MCF 10A (cell line): ENCODE measurements at regions of chr10 and their contacts with region 1.

Region 1: GRCh38 chr10:73848821-73849489 is 25.4 kb downstream of the CAMK2G start:
- DNase-seq: peak; percentile 79
- H3K4me3 Mint-ChIP-seq: no peak overlapping the region
- H3K27ac Mint-ChIP-seq: no peak overlapping the region
- H3K4me1 Mint-ChIP-seq: no peaks in the 10 kb centered on the region
- H3K27me3 Mint-ChIP-seq: no peaks in the 10 kb centered on the region
- CTCF ChIP-seq: peak; percentile 98

Region 2: GRCh38 chr10:73837072-73837471 is 11.9 kb before region 1 on chr10:
- CTCF ChIA-PET with region 1: interaction called, 68 read pairs
- POLR2A ChIA-PET with region 1: no interaction called
- intact Hi-C with region 1: no loop called
- DNase-seq: no peak
- H3K4me3 Mint-ChIP-seq: no peak overlapping the region
- H3K27ac Mint-ChIP-seq: peak overlapping the region; percentile 35
- H3K4me1 Mint-ChIP-seq: no peaks in the 10 kb centered on the region
- H3K27me3 Mint-ChIP-seq: no peaks in the 10 kb centered on the region
- CTCF ChIP-seq: no peak

Region 3: GRCh38 chr10:73950155-73950948 is 101.4 kb after region 1 on chr10:
- CTCF ChIA-PET with region 1: interaction called, 11 read pairs
- POLR2A ChIA-PET with region 1: no interaction called
- intact Hi-C with region 1: no loop called
- DNase-seq: no peak
- H3K4me3 Mint-ChIP-seq: no peak overlapping the region
- H3K27ac Mint-ChIP-seq: no peak overlapping the region
- H3K4me1 Mint-ChIP-seq: no peaks in the 10 kb centered on the region
- H3K27me3 Mint-ChIP-seq: no peaks in the 10 kb centered on the region
- CTCF ChIP-seq: no peak